ENCODE measurements at regions of chr3 and their contacts with region 1.

Region 1: DNA sequence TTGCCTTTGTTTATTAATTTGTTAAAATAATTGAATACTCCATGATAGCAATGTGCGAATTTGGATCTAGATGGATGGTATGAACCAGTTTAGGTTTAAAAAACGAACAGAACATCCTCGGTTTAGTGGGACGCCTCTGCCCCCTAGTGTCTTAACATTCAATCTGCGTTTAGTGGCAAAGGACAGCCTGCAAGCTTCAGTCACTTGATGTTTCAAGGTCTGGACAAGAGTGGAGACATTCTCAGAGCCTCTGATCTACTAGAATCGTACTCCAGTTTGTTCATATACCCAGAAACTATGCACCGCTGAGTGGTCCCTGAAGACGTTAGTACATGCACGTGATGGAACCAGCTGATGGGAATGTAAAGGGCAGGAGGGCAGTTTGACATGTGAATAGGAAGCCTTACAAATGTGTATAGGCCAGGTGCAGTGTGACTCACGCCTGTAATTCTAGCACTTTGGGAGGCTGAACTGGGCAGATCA is 17.8 kb upstream of the ATP13A4 start:
- DNase-seq: peak; percentile 64
- CTCF ChIP-seq: peak; percentile 82

Region 2: GRCh38 chr3:192566706-192567290 is 1005.7 kb before region 1 on chr3:
- in situ Hi-C with region 1: loop called (anchors 25 kb)
- DNase-seq: peak; percentile 66
- CTCF ChIP-seq: peak; percentile 60

Region 3: GRCh38 chr3:192802957-192803899 is 769.2 kb before region 1 on chr3:
- in situ Hi-C with region 1: loop called (anchors 25 kb)
- DNase-seq: peak; percentile 42
- CTCF ChIP-seq: peak; percentile 44

Region 4: DNA sequence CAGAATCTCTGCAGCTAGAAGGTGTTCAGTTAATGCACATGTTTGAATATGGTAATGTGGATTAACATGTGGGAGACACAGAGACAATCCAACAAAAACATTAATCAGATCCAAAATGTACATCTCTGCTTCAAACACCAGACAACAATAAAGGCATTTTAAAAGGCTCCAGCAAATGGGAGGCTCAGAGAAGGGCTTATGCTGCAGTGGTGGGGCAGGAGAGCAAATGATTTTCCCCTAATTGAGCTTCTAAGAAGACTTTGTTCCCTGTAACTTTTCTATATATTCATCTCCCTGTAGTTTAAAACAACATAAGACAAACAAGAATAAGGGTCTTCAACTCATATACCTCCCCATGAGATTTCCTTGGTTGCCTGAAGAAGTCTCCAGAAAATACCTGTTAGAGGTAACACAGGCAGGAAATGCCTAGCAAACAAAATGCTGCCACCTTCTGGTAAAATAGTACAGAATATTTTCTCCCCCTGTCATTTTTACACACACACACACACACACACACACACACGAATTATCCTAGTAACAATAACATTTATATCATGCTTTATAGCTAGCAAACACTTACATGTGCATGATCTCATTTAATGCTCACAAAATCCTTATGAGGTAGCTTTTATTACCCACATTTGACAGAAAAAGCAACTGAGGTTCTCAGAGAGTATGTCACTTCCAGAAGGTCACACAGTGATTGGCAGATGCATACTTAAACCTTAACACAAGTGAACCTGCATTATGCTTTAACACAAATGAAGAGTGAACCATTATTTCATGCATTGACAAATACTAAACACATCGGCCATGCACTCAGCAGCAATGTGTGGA is 531.4 kb before region 1 on chr3:
- in situ Hi-C with region 1: loop called (anchors 25 kb)
- DNase-seq: peak; percentile 62
- CTCF ChIP-seq: peak; percentile 54

Region 5: DNA sequence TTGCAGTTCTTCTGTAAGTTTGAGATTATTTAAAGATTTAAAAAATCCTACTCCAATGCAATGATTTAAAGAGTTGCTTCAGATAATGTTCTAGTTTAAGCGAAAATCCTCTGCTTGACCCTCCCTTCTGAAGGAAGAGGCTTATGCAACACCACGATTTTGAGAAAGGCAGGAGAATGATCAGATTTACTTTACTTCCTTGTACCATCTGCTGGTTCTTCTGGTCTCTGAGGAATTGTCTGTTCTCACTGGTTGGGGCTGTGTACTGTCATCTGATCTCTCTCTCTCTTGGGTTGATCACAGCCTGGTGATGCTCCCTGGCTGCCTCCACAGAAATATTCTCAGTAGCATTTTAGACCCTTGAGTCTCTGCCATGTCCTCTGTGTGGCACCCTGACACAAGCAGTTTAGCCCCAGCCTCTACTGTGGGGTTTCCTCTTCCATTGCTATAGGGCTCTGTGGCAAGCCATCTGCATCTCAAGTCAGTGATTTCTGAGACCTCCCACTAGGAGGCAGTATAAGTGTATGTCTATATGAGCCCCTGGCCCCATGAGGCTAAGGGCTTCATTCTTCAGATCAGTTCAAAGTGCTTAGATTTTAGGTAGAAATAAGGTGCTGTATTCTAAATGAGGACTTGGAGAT is 382.2 kb before region 1 on chr3:
- in situ Hi-C with region 1: loop called (anchors 25 kb)
- DNase-seq: peak; percentile 29
- CTCF ChIP-seq: peak; percentile 50

Region 6: DNA sequence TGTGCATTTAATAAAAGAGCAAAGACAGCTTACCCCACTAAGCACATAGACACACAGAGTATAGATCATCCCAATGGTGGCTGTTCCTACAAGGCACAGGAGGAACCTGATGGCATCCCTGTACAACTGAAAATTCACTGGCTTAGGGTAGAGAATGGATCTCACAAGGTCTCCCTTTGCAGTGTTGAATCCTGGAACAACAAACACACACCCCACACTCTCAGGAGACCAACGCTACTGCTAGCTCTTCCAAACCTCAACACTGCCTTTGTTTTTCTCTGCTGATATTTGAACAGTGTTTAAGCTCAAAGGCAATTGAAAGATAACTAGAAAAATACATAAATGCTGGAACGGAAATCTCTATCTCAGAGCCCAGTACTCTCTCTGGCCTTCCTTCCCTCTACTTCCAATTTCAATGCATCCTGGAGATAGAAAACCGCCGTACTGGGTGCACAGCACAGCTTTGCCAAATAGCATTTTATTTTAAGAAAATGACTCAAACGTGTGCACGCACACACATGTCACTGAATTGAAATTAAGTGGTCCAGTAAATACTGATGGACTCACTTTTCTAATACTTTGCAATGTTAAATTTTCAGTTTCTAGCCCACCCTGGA is 106.4 kb before region 1 on chr3:
- in situ Hi-C with region 1: loop called (anchors 10 kb)
- DNase-seq: no peak
- CTCF ChIP-seq: no peak

Region 7: DNA sequence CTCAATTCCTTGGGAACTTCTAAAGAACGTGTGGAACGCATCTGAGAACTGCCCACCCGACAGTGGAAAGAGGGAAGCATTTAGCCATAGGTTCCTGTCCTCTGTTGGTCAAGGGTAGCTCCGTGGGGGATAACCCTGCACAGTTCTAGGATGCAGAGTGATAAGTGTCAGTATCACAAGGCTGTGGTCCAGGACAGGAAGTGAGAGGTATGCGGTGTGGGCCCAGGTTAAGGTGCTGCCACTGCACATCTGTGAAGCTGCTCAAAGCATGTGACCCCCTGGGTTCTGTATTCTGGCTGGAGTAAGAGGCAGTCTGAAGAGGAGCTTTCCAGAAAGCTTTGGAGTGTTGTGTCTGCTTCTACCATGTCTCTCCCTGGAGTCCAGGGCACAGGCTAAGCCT is 511.8 kb after region 1 on chr3:
- in situ Hi-C with region 1: no loop called
- DNase-seq: peak; percentile 68
- CTCF ChIP-seq: no peak